Natural killer cell (primary cell): ENCODE measurements at regions of chr14 and their contacts with region 1.

Region 1: DNA sequence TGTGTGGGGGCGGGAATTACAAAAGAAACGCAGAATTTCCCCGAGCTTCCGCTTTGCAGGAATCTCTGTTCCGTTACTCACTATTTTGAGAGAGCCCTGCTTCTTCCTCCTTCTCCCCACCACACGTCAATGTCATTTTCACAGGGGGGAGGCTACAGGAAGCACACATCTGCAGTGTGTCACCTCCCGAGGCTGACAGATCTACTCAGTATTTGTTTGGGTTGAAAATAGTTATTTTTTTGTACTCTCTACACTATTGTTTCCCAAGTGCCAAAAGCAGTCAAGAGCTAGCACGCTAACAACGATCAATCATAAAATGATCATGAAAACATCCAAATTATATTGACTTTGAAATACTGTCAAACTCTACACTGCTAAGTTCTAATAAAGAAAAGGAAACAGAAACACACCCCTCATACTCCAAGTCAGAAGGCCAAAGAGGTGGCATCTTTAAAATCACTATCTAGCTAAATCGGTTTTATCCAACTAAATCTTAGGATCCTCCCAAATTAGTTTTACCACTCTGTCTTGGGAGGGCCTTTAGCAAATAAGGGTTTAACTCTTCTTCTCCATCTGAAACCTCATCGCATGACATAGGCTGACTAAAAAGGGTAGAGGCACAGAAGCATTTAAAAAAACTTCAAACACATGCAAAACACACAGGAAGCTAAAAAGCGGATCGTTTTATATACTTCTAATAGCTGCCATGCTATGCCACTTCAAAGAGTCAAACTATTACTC is 51.8 kb downstream of the FOXN3 start:
- DNase-seq: peak; percentile 38 to 83
- ATAC-seq: peak; percentile 92 to 96 (median 96)
- H3K4me3 ChIP-seq: peak overlapping the region; percentile 13
- H3K4me3 Mint-ChIP-seq: peak overlapping the region; percentile 88
- H3K27ac ChIP-seq: peak overlapping the region; percentile 86
- H3K27ac Mint-ChIP-seq: peak overlapping the region; percentile 88 to 90
- H3K4me1 ChIP-seq: peaks cover 34% of the 10 kb centered on the region
- H3K4me1 Mint-ChIP-seq: peaks cover 49 to 59% of the 10 kb centered on the region in 2 donors
- H3K27me3 ChIP-seq: no peaks in the 10 kb centered on the region
- H3K27me3 Mint-ChIP-seq: no peaks in the 10 kb centered on the region
- CTCF ChIP-seq: no peak

Region 2: DNA sequence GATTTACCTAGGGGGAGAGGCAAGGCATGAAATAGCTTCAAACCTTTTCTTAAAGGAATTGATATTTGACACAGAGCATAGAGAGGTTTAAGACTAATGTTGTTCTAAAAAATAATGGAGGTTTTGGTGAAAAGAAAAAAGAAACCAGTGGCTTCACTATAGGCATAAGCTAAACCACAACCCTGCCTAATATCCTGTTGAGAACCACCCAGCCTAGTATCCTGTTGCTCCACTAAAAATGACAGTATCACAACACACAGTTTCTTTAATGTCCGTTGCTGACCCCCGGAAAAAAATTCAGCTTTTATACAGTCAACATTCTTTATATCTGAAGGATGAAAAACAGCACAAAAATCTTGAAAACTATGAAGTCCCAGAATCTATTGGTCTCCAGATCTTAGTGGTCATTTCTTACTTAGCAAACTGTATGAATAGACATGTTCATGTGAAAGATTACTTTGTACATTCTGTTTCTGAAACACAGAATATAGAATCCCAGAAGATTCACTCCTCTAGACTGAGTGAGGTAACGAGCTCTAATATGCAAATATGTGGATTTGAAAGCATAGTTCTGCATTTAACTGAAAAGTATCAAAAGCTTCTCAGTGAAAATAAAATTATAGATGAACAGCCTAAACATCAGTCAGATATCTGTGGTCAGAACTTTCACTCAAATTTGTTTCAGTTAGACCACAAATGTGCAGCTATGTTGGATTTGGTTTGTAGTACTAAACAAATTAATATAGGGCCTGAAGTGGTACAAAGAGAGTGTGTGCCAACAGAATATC is 1412.7 kb before region 1 on chr14:
- intact Hi-C with region 1: loop called (anchors 10 kb)
- DNase-seq: peak in 1 of 2 donors; percentile 54
- ATAC-seq: peak; percentile 75 to 87 (median 83)
- H3K4me3 ChIP-seq: peak overlapping the region; percentile 23
- H3K4me3 Mint-ChIP-seq: peak overlapping the region; percentile 77
- H3K27ac ChIP-seq: peak overlapping the region; percentile 93
- H3K27ac Mint-ChIP-seq: peak overlapping the region; percentile 92 to 98
- H3K4me1 ChIP-seq: peaks cover 12% of the 10 kb centered on the region
- H3K4me1 Mint-ChIP-seq: peaks cover 76 to 79% of the 10 kb centered on the region in 2 donors
- H3K27me3 ChIP-seq: no peaks in the 10 kb centered on the region
- H3K27me3 Mint-ChIP-seq: no peaks in the 10 kb centered on the region
- CTCF ChIP-seq: no peak

Region 3: DNA sequence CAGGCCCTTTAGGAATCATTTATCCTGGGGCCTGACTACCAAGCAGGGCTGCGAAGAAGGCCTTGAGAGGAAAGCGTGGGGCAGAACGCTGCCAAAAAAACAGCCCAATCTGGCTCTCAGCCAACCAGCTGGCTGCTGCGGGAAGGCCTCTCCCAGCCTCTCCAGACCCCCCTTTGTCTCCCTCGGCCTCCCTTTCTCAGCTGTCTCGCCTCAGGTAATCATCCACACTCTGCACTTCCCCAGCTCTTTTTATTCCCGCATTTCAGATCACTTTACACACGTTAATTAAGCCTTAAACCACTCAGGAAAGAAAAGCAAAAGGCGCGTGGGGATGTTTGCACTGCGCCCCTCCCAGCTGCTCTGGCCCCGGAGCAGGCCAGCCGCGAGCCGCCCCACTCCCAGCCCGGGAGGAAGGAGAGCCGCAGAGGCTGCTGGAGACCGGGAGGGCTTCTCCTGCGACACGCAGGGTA is 260.0 kb after region 1 on chr14:
- intact Hi-C with region 1: loop called (anchors 5 kb)
- DNase-seq: no peak
- ATAC-seq: no peak
- H3K4me3 ChIP-seq: no peak overlapping the region
- H3K4me3 Mint-ChIP-seq: peak overlapping the region; percentile 40
- H3K27ac ChIP-seq: peak overlapping the region; percentile 85
- H3K27ac Mint-ChIP-seq: peak overlapping the region; percentile 90 to 95
- H3K4me1 ChIP-seq: peaks cover 33% of the 10 kb centered on the region
- H3K4me1 Mint-ChIP-seq: peaks cover 52 to 56% of the 10 kb centered on the region in 2 donors
- H3K27me3 ChIP-seq: no peaks in the 10 kb centered on the region
- H3K27me3 Mint-ChIP-seq: no peaks in the 10 kb centered on the region
- CTCF ChIP-seq: no peak

Region 4: DNA sequence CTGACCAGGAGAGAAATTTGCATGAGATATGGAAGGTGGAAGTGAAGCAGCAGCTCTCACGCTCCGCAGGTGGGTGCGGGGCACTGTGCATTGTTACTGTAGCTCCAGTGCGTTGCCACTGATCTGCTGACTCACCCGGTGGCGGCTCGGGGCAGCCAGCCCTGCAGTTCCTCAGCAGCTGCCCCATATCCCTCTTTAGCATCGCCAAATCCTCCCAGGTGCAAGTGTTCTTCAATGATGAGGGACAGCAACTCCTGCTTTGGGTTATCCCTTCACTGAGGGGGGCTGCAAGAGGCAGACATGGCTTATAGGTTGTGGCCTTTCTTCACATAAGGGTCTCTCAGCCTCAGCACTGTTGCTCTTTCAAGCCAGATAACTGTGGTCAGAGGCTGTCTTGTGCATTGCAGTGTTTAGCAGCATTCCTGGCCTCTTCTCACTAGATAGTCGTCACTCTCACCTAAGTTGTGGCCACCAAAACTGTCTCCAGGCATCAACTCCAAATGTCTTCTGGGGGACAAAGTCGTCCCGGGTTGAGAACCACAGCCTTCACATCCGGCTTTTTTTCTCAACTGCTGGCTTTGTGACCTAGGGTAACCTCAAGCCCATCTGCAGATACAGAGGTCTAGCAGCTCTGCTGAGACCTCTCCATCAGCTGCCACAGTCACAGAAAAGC is 408.5 kb after region 1 on chr14:
- intact Hi-C with region 1: loop called (anchors 10 kb)
- DNase-seq: peak; percentile 59 to 82
- ATAC-seq: peak; percentile 83 to 93 (median 89)
- H3K4me3 ChIP-seq: no peak overlapping the region
- H3K4me3 Mint-ChIP-seq: peak overlapping the region; percentile 74
- H3K27ac ChIP-seq: peak overlapping the region; percentile 28
- H3K27ac Mint-ChIP-seq: peak overlapping the region; percentile 76 to 83
- H3K4me1 ChIP-seq: peaks cover 27% of the 10 kb centered on the region
- H3K4me1 Mint-ChIP-seq: peaks cover 16 to 17% of the 10 kb centered on the region in 2 donors
- H3K27me3 ChIP-seq: no peaks in the 10 kb centered on the region
- H3K27me3 Mint-ChIP-seq: peaks cover 0 to 7% of the 10 kb centered on the region in 2 donors
- CTCF ChIP-seq: no peak